IMR-90 (cell line): ENCODE measurements at regions of chr1 and their contacts with region 1.

Region 1: DNA sequence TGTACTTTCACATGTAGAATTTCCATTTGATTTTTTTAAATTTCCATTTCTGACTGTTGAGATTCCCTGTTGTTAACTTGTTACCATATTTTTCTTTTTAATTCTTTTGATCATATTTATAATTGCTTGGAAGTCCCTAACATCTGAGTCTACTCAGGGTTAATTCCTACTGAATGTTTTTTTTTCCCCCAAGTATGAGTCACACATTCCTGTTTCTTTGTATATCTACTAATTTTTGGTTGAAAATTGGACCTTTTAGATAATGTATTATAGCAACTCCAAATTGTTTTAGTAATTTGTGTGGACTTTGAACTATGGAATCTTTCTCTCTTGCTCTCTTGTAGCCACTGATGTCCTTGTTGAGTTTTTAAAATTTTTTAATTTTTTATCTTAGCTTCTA is 54.6 kb downstream of the STXBP3 start:
- DNase-seq: peak; percentile 61
- ATAC-seq: peak; percentile 73
- H3K4me3 ChIP-seq: no peak overlapping the region
- H3K27ac ChIP-seq: peak overlapping the region; percentile 2; the same call in 1 of the 2 replicates
- H3K4me1 ChIP-seq: peaks cover 2% of the 10 kb centered on the region
- H3K27me3 ChIP-seq: no peaks in the 10 kb centered on the region
- CTCF ChIP-seq: no peak
- POLR2A ChIP-seq: no peak
- RAD21 ChIP-seq: no peak

Region 2: GRCh38 chr1:108691942-108692723 is 109.0 kb before region 1 on chr1 and contains the start of gene PRPF38B:
- CTCF ChIA-PET with region 1: no interaction called
- POLR2A ChIA-PET with region 1: interaction called, 4 read pairs
- dilution Hi-C with region 1: no loop called
- in situ Hi-C with region 1: no loop called
- intact Hi-C with region 1: loop called (anchors 10 kb)
- DNase-seq: peak; percentile 87
- ATAC-seq: peak; percentile 97
- H3K4me3 ChIP-seq: peak within 1 kb of the TSS; percentile 84
- H3K27ac ChIP-seq: peak within 1 kb of the TSS; percentile 97
- H3K4me1 ChIP-seq: no peaks in the 10 kb centered on the region
- H3K27me3 ChIP-seq: no peaks in the 10 kb centered on the region
- CTCF ChIP-seq: no peak
- POLR2A ChIP-seq: peak; percentile 97
- RAD21 ChIP-seq: no peak
- total RNA-seq, gene PRPF38B: 9.0 and 15.0 TPM in 2 replicates

Region 3: DNA sequence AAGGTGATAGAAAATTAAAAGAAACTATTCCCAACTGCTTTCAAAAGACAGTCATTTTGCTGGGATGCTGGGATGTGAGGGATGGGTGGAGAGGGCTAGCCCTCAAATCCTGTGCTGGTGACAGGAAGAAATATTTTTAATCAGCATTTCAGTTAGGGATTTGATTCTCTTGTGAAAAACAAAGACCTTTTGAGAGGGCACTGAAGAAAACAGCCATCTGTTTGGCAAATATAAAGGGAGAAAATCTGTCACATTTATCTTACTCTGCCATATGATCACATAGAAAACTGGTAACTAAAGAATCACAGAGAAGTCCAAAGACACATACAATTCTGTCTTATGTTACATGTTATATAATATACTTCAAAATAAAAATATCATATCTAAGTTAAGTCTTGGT is 42.3 kb before region 1 on chr1:
- CTCF ChIA-PET with region 1: no interaction called
- POLR2A ChIA-PET with region 1: no interaction called
- dilution Hi-C with region 1: no loop called
- in situ Hi-C with region 1: no loop called
- intact Hi-C with region 1: loop called (anchors 5 kb)
- DNase-seq: no peak
- ATAC-seq: no peak
- H3K4me3 ChIP-seq: no peak overlapping the region
- H3K27ac ChIP-seq: no peak overlapping the region
- H3K4me1 ChIP-seq: no peaks in the 10 kb centered on the region
- H3K27me3 ChIP-seq: no peaks in the 10 kb centered on the region
- CTCF ChIP-seq: no peak
- POLR2A ChIP-seq: no peak
- RAD21 ChIP-seq: no peak

Region 4: GRCh38 chr1:108777839-108778238 is 23.3 kb before region 1 on chr1:
- CTCF ChIA-PET with region 1: interaction called, 12 read pairs
- POLR2A ChIA-PET with region 1: interaction called, 3 read pairs
- dilution Hi-C with region 1: no loop called
- in situ Hi-C with region 1: no loop called
- intact Hi-C with region 1: no loop called
- DNase-seq: peak; percentile 3
- ATAC-seq: peak; percentile 73
- H3K4me3 ChIP-seq: no peak overlapping the region
- H3K27ac ChIP-seq: no peak overlapping the region
- H3K4me1 ChIP-seq: no peaks in the 10 kb centered on the region
- H3K27me3 ChIP-seq: no peaks in the 10 kb centered on the region
- CTCF ChIP-seq: no peak
- POLR2A ChIP-seq: no peak
- RAD21 ChIP-seq: no peak

Region 5: GRCh38 chr1:108933944-108934343 is 132.8 kb after region 1 on chr1:
- CTCF ChIA-PET with region 1: no interaction called
- POLR2A ChIA-PET with region 1: no interaction called
- dilution Hi-C with region 1: no loop called
- in situ Hi-C with region 1: no loop called
- intact Hi-C with region 1: no loop called
- DNase-seq: no peak
- ATAC-seq: no peak
- H3K4me3 ChIP-seq: no peak overlapping the region
- H3K27ac ChIP-seq: no peak overlapping the region
- H3K4me1 ChIP-seq: no peaks in the 10 kb centered on the region
- H3K27me3 ChIP-seq: no peaks in the 10 kb centered on the region
- CTCF ChIP-seq: no peak
- POLR2A ChIP-seq: no peak
- RAD21 ChIP-seq: no peak

Region 6: DNA sequence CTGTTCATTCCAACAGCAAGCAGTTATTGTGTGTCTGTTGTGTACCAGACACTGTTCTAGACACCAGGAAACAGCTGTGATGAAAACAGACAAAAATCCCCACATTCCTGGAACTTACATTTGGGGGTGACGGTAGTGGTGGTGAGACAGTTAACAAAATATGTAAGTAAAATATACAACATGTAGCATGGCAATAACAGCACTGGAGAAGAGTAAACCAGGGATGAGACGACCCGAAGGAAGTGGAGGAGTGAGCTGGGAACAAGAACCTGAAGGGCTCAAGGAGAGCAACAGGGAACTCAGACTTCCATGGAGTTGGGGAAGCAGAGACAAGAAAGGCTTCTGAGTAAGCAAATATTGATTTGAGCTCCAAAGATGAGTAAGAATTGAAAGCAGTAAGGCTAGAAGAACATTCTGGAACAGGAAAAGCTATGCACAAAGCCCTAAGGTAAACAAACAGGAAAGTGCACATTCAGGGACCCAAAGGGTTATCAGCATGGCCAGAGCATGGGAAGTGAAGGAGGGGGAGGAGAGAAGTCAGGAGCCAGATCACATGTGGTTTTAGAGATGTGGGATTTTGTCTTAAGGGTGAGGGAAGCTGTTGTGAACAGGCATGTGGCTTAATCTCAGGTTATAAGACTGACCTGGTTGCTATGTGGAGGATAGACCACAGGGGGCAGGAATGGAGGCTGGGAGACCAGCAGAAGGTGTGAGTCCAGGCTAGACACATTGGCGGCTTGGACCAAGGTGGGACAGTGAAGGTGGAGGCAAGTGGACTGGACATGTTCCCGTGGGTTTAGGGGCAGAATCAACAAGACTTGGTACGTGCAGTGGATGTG is 1116.9 kb after region 1 on chr1:
- CTCF ChIA-PET with region 1: no interaction called
- POLR2A ChIA-PET with region 1: interaction called, 19 read pairs
- dilution Hi-C with region 1: no loop called
- in situ Hi-C with region 1: no loop called
- intact Hi-C with region 1: no loop called
- DNase-seq: peak; percentile 81
- ATAC-seq: peak; percentile 81
- H3K4me3 ChIP-seq: no peak overlapping the region
- H3K27ac ChIP-seq: peak overlapping the region; percentile 64
- H3K4me1 ChIP-seq: peaks cover 24% of the 10 kb centered on the region
- H3K27me3 ChIP-seq: no peaks in the 10 kb centered on the region
- CTCF ChIP-seq: no peak
- POLR2A ChIP-seq: no peak
- RAD21 ChIP-seq: 0 out of 2 replicates have a peak, but pooled peaks have one; percentile 5